Gastrocnemius medialis (tissue), 4 donors: ENCODE measurements at regions of chr1 and their contacts with region 1.

Region 1: GRCh38 chr1:203480525-203481084 is 5.0 kb downstream of the PRELP start:
- DNase-seq: peak in 1 of 2 donors; percentile 43
- ATAC-seq: peak; percentile 17 to 45
- H3K4me3 ChIP-seq: peak overlapping the region; percentile 8 to 48 (median 28)
- H3K27ac ChIP-seq: peak overlapping the region; percentile 61 to 71 (median 68)
- H3K4me1 ChIP-seq: peaks cover 0 to 9% of the 10 kb centered on the region in 2 donors
- H3K27me3 ChIP-seq: no peaks in the 10 kb centered on the region
- CTCF ChIP-seq: no peak
- POLR2A ChIP-seq: no peak

Region 2: GRCh38 chr1:203340112-203340804 is 140.3 kb before region 1 on chr1:
- in situ Hi-C with region 1: loop called (anchors 5 to 10 kb)
- intact Hi-C with region 1: no loop called
- DNase-seq: peak; percentile 63 to 67
- ATAC-seq: peak; percentile 53 to 65
- H3K4me3 ChIP-seq: no peak overlapping the region
- H3K27ac ChIP-seq: peak overlapping the region; percentile 0 to 71 (median 26)
- H3K4me1 ChIP-seq: peaks cover 28 to 37% of the 10 kb centered on the region in 2 donors
- H3K27me3 ChIP-seq: no peaks in the 10 kb centered on the region
- CTCF ChIP-seq: peak; percentile 71 to 89 (median 87)
- POLR2A ChIP-seq: no peak

Region 3: GRCh38 chr1:203408486-203409427 is 71.8 kb before region 1 on chr1:
- in situ Hi-C with region 1: no loop called
- intact Hi-C with region 1: no loop called
- DNase-seq: peak; percentile 70 to 81
- ATAC-seq: peak; percentile 86 to 88
- H3K4me3 ChIP-seq: no peak overlapping the region
- H3K27ac ChIP-seq: peak overlapping the region; percentile 17 to 49 (median 26)
- H3K4me1 ChIP-seq: peaks cover 0 to 4% of the 10 kb centered on the region in 2 donors
- H3K27me3 ChIP-seq: peaks cover 0 to 5% (median 4%) of the 10 kb centered on the region in 3 donors
- CTCF ChIP-seq: no peak
- POLR2A ChIP-seq: peak in 1 of 2 donors; percentile 24